ENCODE measurements at regions of chr19 and their contacts with region 1.

Region 1: DNA sequence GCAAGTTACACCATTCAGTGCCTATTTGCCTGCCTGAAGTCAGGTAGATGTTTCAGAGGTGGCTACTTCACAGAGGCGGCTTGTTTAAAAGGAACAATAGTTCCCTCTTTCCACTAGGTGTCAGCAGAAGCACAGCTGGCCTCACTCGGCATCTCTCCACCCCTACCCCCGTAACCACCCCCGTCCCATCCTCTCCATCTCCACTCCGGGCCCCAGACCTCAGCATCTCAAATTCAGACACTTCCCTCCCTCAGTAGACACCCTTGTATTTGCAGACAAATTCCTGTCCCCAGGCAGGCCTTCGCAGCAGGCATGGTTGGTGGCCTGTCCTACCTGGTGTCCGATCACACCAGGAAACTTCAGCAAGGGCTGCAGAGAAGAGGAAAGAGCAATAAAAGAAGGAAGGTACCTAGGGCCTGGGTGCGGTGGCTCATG is 9.1 kb upstream of the DPP9 start:
- DNase-seq: no peak
- H3K4me3 ChIP-seq: no peak overlapping the region
- H3K27me3 ChIP-seq: no peaks in the 10 kb centered on the region; the same call in 1 of the 2 replicates
- CTCF ChIP-seq: peak; percentile 82

Region 2: GRCh38 chr19:4647676-4648644 is 84.7 kb before region 1 on chr19:
- CTCF ChIA-PET with region 1: no interaction called
- POLR2A ChIA-PET with region 1: no interaction called
- DNase-seq: no peak
- H3K4me3 ChIP-seq: no peak overlapping the region
- H3K27me3 ChIP-seq: no peaks in the 10 kb centered on the region
- CTCF ChIP-seq: no peak

Region 3: GRCh38 chr19:4742723-4743646 is 10.3 kb after region 1 on chr19:
- CTCF ChIA-PET with region 1: interaction called, 20 read pairs
- POLR2A ChIA-PET with region 1: no interaction called
- DNase-seq: no peak
- H3K4me3 ChIP-seq: no peak overlapping the region
- H3K27me3 ChIP-seq: peaks cover 4% of the 10 kb centered on the region
- CTCF ChIP-seq: no peak

Region 4: GRCh38 chr19:4748185-4748584 is 15.5 kb after region 1 on chr19:
- CTCF ChIA-PET with region 1: interaction called, 20 read pairs
- POLR2A ChIA-PET with region 1: no interaction called
- DNase-seq: no peak
- H3K4me3 ChIP-seq: no peak overlapping the region
- H3K27me3 ChIP-seq: peaks cover 7% of the 10 kb centered on the region
- CTCF ChIP-seq: no peak

Region 5: GRCh38 chr19:4781801-4782200 is 49.1 kb after region 1 on chr19:
- CTCF ChIA-PET with region 1: interaction called, 15 read pairs
- POLR2A ChIA-PET with region 1: no interaction called
- DNase-seq: no peak
- H3K4me3 ChIP-seq: no peak overlapping the region
- H3K27me3 ChIP-seq: peaks cover 3% of the 10 kb centered on the region
- CTCF ChIP-seq: no peak

Region 6: GRCh38 chr19:4803736-4804695 is 71.3 kb after region 1 on chr19:
- CTCF ChIA-PET with region 1: interaction called, 19 read pairs
- POLR2A ChIA-PET with region 1: no interaction called
- DNase-seq: no peak
- H3K4me3 ChIP-seq: no peak overlapping the region
- H3K27me3 ChIP-seq: no peaks in the 10 kb centered on the region
- CTCF ChIP-seq: peak; percentile 85